ENCODE measurements at regions of chr5 and their contacts with region 1.

Region 1: DNA sequence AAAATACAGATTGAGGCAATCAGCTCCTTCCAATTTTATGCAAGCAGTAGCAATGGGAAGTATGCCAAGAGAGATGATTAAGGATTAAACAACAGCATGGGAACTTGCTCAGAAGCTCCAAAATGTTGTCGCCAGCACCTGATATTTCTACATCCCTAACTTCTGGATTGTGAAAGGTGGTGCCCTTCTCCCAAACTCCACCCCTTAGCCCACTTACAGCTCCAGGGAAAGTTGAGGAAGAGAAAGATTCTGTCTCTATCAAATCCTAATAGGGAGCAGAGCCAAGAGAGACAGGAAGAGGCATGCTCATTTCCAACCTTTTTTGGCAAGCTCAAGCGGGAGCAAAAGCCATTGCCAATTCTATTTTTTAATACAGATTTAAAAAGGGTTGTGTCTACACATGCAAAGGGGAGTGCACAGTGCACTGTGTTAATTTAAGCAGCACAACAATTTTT is 92.4 kb upstream of the NR3C1 start:
- DNase-seq: no peak
- H3K4me3 ChIP-seq: no peak overlapping the region
- H3K27ac ChIP-seq: no peak overlapping the region
- H3K4me1 ChIP-seq: peaks cover 26% of the 10 kb centered on the region
- H3K27me3 ChIP-seq: no peaks in the 10 kb centered on the region
- CTCF ChIP-seq: no peak
- POLR2A ChIP-seq: no peak

Region 2: DNA sequence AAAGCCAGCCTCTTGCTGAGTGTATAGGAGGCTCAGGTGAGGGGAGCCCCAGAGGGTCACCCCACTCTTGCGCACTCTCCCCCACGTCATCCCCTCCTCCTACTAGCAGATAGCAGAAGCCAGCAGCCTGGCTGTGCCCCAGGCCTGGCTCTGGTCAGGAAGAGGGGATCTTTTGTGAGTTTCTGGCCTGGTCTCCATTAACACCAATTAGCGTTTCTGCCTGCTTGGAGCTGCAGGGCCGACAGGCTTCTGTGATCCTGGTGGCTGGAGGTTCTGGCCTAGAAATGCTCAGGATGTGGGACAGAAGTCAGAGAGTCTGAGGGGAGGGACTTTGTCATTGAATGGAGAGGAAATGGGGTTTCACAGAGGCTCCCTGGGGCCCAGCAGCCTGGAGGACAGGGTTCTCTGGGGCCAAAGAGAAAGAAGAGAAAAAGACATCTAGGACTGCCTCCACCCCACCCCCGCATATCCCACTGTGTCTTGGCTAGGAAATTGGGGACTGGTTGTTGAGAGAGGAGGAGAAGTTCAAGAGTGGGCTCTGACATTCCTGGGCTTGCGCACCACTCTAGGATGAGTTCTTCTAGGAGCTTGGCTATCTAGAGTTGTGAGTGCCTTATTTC is 1766.4 kb before region 1 on chr5:
- intact Hi-C with region 1: loop called (anchors 5 kb)
- DNase-seq: no peak
- H3K4me3 ChIP-seq: no peak overlapping the region
- H3K27ac ChIP-seq: no peak overlapping the region
- H3K4me1 ChIP-seq: no peaks in the 10 kb centered on the region
- H3K27me3 ChIP-seq: no peaks in the 10 kb centered on the region
- CTCF ChIP-seq: no peak
- POLR2A ChIP-seq: no peak

Region 3: DNA sequence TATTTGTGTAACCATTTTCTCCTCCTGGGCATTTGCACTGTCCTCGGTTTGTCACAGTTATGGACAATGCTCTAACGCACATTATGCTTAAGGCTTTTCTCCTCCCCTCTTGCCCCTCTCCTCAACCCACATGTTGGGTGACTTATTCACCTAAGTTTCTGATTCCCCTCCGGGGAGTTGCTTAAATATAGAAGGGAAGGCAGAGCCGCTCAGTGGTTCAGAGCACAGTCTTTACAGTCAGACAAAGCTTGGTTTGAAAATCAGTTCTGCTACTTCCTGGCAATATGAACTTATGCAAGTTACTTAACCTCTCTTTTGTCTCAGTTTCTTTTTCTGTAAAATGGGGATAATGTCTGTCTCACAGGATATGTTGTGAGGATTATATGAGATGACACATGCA is 1129.8 kb before region 1 on chr5:
- intact Hi-C with region 1: no loop called
- DNase-seq: no peak
- H3K4me3 ChIP-seq: no peak overlapping the region
- H3K27ac ChIP-seq: no peak overlapping the region
- H3K4me1 ChIP-seq: peaks cover 14% of the 10 kb centered on the region
- H3K27me3 ChIP-seq: no peaks in the 10 kb centered on the region
- CTCF ChIP-seq: no peak
- POLR2A ChIP-seq: no peak

Region 4: DNA sequence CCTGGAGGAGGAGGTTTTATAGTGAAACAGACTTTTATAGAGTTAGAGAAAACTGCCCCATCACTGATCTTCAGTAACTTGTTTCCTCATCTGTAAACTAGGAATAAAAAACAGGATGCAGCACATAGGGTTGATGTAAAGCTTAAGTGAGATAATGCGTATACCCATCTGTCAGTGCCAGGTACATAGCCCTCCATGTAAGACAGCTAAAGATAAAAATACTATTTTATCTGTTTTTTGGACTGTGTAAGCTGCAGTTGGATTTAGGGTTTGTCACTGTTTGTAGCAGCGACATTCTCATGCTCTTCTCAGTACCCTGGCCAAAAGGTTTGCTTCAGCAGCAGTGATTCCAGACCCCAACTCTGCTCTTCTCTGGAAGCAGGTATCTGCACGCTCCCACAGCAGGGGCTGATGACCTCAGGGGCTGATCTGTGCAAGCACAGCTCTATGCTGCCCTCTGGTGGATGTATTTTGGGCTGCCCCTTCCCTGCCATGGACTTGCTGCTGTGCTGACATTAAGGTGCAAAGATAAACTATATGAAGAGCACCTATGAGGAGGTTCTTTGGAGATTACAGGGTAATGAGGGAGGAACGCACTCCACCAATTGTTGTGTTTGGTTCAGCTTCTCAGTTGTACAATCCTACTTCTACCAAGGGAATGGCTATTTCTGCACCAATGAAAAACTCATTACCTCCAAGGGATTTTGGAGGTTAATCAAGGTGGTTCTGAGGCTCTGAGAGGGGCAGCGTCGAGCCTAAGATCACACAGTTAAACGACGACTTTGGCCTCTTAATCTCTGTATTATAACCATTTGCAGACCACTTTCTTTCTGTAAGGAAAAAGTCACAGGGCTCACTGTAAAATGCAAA is 329.2 kb after region 1 on chr5:
- intact Hi-C with region 1: no loop called
- DNase-seq: no peak
- H3K4me3 ChIP-seq: no peak overlapping the region
- H3K27ac ChIP-seq: no peak overlapping the region
- H3K4me1 ChIP-seq: no peaks in the 10 kb centered on the region
- H3K27me3 ChIP-seq: no peaks in the 10 kb centered on the region
- CTCF ChIP-seq: peak; percentile 92 to 94 (median 94)
- POLR2A ChIP-seq: no peak

Measured in vagina (tissue), 2 donors.